ENCODE measurements at regions of chr15 and their contacts with region 1.

Region 1: DNA sequence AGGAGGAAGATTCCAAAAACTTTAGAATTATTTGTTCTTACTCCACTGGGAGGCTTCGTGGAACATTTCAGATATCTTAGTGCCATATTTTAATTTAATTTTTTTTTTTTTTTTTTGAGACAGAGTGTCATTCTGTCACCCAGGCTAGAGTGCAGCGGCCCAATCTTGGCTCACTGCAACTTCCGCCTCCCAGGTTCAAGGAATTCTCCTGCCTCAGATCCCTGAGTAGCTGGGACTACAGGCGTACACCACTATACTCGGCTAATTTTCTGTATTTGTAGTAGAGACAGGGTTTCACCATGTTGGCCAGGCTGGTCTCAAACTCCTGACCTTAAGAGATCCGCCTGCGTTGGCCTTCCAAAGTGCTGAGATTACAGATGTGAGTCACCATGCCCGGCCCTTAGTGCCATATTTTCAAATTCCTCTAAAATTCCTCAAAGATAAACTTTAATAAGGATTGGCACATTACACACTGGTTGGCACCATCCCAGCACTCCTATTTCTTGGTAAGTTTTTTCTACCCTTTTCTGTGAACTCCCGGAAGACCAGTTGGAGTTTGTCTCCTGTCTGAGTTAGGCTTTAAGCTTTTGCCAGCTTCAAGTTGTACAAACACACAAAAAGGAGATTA is 693.7 kb downstream of the MCTP2 start:
- DNase-seq: peak; percentile 76 to 77
- ATAC-seq: peak; percentile 42
- H3K4me3 ChIP-seq: no peak overlapping the region
- H3K27ac ChIP-seq: no peak overlapping the region
- H3K4me1 ChIP-seq: peaks cover 0 to 4% of the 10 kb centered on the region in 2 donors
- H3K27me3 ChIP-seq: no peaks in the 10 kb centered on the region

Region 2: DNA sequence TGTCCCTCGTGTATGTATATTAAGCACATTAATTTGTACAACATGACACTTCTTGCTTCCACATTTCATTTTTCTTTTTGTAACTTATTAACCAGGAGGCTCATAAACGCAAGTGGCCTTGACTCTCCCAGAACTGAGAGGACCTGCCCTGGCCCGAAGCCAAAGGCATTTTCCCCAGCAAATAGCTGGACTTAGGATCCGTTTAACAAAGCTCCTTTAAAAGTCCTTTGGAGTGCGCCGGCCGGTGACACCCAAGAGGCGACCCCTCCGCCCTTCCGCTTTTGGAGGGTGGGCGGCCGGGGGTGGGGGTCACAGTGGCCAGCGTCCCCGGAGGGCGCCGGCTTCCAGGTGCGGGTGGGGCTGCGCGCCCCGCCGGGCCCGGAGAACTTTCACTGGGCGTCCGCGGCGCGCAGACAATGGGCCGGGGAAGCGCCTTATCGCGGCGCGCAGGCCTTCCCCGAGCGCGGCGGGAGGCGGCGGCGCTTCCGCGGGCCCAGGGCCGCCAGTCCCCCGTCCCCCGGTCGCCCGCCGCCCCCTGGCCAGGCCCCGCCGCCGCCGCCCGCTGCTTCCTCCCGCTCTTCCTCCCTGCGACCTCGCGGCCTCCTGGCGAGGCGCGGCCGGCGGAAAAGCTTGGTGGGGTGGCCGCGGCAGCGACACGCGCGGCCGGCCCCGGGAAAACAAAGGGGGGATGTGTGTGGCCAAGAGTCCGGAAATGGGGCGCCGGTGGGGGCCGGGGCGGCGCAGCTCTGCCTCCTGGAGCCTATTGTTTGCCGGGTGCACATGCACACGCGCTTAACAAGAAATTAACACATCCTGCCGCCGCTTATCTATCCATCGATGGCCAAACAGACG is 80.3 kb before region 1 on chr15:
- intact Hi-C with region 1: loop called in 1 of 2 experiments (anchors 10 kb)
- DNase-seq: peak; percentile 62 to 88
- ATAC-seq: peak; percentile 75
- H3K4me3 ChIP-seq: peak overlapping the region; percentile 28 to 29
- H3K27ac ChIP-seq: peak overlapping the region; percentile 84 to 89
- H3K4me1 ChIP-seq: peaks cover 0 to 3% of the 10 kb centered on the region in 2 donors
- H3K27me3 ChIP-seq: no peaks in the 10 kb centered on the region

Region 3: DNA sequence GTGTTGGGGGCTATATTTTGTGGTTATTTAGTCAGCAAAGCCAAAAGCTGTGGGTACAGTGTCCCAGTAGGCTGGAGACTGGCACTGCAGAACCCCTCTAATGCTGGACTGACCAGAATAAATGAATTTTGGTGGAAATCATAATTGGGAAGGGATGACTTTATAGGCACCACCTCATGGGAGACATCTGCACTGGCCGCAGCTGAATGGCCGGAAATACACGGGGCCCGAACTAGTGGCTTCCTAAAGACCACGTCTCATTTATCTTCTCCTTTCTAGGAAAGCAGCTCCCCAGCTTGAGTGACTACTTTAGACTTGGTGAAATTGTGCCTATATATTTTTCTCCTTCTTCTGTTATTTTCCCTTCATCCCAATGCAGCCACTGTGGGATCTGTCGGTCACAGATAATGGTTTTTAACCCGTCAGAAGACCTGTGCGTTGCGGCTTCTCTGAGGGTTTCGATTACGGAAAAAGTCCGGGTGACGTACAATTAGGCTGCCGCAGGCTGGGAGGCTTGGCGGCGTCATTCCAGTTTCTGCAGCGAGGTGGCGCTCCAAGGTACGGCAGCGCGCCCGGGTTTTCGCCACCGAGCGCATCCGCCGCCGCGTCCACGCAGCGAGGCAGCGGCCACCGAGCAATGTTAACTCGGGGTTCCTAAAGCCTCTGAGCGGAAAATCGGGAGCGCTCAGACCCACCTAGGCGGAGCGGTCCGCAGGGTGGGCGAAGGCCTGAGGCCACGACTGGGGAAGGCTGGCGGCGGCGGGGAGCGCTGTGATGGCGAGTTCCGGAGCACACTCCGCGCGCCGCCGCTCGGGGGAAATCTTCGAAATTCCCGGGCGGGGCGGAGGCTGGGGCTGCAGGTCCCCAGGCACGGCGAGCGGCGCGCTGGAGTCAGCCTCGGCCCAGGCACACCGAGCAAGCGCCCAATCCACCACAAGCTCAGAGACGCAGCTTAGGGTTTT is 1431.7 kb after region 1 on chr15:
- intact Hi-C with region 1: loop called in 1 of 2 experiments (anchors 5 kb)
- DNase-seq: peak; percentile 81 to 96
- ATAC-seq: peak; percentile 80
- H3K4me3 ChIP-seq: peak overlapping the region; percentile 62 to 66
- H3K27ac ChIP-seq: no peak overlapping the region
- H3K4me1 ChIP-seq: no peaks in the 10 kb centered on the region
- H3K27me3 ChIP-seq: no peaks in the 10 kb centered on the region

Measured in aorta (tissue), 5 donors.